B cell (primary cell): ENCODE measurements at regions of chr1 and their contacts with region 1.

Region 1: DNA sequence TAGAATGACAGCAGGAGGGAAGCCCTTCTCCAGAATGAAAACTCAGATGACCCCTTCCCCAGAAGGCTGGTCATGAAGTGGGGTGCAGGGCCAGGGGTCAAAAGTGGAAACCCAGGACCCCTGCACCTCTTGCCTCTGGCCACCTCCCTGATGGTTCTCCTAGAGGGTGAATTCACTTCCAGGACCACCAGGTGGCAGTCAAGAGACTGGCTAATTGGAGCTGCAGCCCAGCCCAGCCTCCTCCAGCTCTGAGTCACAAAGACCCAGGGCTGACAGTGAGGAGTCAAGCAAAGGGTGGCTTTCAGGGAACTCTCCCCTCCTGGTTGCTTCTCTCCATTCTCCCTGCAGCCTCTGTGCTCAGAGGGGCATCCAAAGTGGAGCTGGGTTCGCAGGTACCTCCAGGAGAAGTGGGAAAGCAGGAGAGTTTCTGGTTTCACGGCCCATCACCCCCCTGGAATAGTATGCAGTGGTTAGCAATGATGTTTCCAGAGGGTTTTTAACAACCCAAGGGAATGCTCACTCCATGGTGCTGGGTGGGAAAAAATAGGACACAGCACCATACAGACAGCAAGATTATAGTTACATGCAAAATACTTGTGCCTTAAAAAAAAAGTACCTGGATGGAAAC is 6.1 kb upstream of the EPHB2 start:
- DNase-seq: peak; percentile 70
- ATAC-seq: peak; percentile 85
- H3K4me3 ChIP-seq: no peak overlapping the region
- H3K4me3 Mint-ChIP-seq: no peak overlapping the region
- H3K27ac ChIP-seq: no peak overlapping the region
- H3K27ac Mint-ChIP-seq: no peak overlapping the region
- H3K4me1 ChIP-seq: no peaks in the 10 kb centered on the region
- H3K4me1 Mint-ChIP-seq: peaks cover 2% of the 10 kb centered on the region
- H3K27me3 ChIP-seq: peaks cover 0 to 21% (median 2%) of the 10 kb centered on the region in 4 experiments
- H3K27me3 Mint-ChIP-seq: peaks cover 43% of the 10 kb centered on the region
- CTCF ChIP-seq: peak; percentile 91

Region 2: DNA sequence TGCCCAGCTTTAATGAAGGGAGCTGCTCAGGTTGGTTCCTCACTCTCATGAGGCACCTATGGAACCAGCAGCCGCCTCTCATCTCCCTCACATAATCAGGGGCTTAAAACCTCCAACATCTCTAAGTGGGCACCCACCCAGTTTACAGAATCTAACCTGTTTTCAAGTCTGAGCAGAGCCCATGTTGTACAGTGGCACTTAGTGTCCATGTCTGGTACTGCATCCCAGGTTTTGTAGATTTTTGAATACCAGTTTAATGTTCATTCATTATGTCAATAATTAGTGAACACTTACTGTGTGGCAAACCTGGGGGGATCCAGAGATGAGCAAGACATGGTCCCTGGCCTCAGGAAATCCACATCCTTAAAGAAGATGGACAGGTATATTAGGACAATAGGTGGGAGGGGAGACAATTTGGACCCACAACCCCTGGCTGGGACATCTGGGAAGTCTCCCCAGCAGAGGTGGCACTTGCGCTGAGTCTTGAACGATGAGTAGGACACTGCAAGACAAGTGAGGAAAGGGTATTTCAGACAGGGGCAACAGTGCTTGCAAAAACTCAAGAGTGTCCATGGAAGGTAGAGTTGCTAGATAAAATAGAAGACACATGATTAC is 184.8 kb after region 1 on chr1:
- CTCF ChIA-PET with region 1: interaction called, 15 read pairs
- POLR2A ChIA-PET with region 1: no interaction called
- intact Hi-C with region 1: loop called (anchors 1 kb)
- DNase-seq: peak; percentile 22
- ATAC-seq: no peak
- H3K4me3 ChIP-seq: no peak overlapping the region
- H3K4me3 Mint-ChIP-seq: no peak overlapping the region
- H3K27ac ChIP-seq: no peak overlapping the region
- H3K27ac Mint-ChIP-seq: no peak overlapping the region
- H3K4me1 ChIP-seq: peaks cover 7 to 10% of the 10 kb centered on the region in 2 donors
- H3K4me1 Mint-ChIP-seq: peaks cover 9% of the 10 kb centered on the region
- H3K27me3 ChIP-seq: no peaks in the 10 kb centered on the region
- H3K27me3 Mint-ChIP-seq: peaks cover 14% of the 10 kb centered on the region
- CTCF ChIP-seq: peak; percentile 62

Region 3: DNA sequence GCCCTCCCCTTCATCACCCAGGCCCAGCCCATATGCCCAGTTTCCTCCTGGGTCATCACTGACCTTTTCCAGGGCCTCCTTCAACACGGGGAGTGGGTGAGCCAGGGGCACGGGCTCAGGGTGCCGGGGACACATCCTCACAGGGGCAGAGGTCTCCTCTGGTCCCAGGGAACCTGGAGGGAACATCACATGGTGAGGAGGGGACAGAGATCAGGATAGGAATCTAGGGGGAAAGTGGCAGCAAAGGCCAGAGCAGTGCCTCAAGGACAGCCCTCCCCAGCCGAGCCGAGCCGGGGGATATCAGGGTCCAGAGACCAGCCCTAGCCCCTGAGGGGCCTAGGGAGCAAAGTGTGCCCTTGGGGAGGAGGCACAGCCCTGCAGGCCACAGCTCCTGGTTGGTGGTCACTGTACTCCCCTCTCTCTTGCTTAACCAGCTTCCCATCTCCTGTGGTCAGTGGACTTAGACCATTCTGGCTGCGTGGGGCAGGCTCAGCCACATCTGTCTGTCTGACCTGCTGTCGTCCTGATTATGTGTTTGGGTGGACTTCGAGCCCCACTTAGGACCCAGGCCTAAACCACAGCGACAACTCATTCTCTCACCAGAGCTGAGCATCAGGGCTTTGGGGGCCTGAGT is 258.6 kb after region 1 on chr1:
- CTCF ChIA-PET with region 1: interaction called, 12 read pairs
- POLR2A ChIA-PET with region 1: no interaction called
- intact Hi-C with region 1: no loop called
- DNase-seq: no peak
- ATAC-seq: no peak
- H3K4me3 ChIP-seq: no peak overlapping the region
- H3K4me3 Mint-ChIP-seq: no peak overlapping the region
- H3K27ac ChIP-seq: no peak overlapping the region
- H3K27ac Mint-ChIP-seq: no peak overlapping the region
- H3K4me1 ChIP-seq: peaks cover 0 to 3% of the 10 kb centered on the region in 2 donors
- H3K4me1 Mint-ChIP-seq: no peaks in the 10 kb centered on the region
- H3K27me3 ChIP-seq: peaks cover 0 to 11% (median under 1%) of the 10 kb centered on the region in 4 experiments
- H3K27me3 Mint-ChIP-seq: peaks cover 23% of the 10 kb centered on the region
- CTCF ChIP-seq: no peak

Region 4: DNA sequence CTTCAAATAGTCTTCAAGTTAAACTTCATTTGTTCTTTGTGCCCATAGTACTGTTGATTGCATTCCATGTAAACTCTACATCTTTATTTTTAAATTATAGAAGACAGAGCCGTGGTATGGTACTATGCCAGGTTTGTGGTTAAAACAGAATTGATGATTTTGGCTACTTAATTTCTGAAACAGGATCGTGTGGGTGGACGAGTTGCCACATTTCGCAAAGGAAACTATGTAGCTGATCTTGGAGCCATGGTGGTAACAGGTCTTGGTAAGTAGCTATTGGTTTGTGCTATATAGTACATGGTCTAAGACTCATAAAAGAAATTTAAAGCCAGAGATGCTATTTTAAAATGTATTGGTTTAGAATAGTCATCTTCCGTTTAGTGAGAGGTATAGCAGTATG is 352.7 kb after region 1 on chr1:
- CTCF ChIA-PET with region 1: no interaction called
- POLR2A ChIA-PET with region 1: no interaction called
- intact Hi-C with region 1: no loop called
- DNase-seq: no peak
- ATAC-seq: no peak
- H3K4me3 ChIP-seq: no peak overlapping the region
- H3K4me3 Mint-ChIP-seq: no peak overlapping the region
- H3K27ac ChIP-seq: no peak overlapping the region
- H3K27ac Mint-ChIP-seq: no peak overlapping the region
- H3K4me1 ChIP-seq: no peaks in the 10 kb centered on the region
- H3K4me1 Mint-ChIP-seq: no peaks in the 10 kb centered on the region
- H3K27me3 ChIP-seq: no peaks in the 10 kb centered on the region
- H3K27me3 Mint-ChIP-seq: no peaks in the 10 kb centered on the region
- CTCF ChIP-seq: no peak